HEK293 (cell line): ENCODE measurements at regions of chr17 and their contacts with region 1.

Region 1: DNA sequence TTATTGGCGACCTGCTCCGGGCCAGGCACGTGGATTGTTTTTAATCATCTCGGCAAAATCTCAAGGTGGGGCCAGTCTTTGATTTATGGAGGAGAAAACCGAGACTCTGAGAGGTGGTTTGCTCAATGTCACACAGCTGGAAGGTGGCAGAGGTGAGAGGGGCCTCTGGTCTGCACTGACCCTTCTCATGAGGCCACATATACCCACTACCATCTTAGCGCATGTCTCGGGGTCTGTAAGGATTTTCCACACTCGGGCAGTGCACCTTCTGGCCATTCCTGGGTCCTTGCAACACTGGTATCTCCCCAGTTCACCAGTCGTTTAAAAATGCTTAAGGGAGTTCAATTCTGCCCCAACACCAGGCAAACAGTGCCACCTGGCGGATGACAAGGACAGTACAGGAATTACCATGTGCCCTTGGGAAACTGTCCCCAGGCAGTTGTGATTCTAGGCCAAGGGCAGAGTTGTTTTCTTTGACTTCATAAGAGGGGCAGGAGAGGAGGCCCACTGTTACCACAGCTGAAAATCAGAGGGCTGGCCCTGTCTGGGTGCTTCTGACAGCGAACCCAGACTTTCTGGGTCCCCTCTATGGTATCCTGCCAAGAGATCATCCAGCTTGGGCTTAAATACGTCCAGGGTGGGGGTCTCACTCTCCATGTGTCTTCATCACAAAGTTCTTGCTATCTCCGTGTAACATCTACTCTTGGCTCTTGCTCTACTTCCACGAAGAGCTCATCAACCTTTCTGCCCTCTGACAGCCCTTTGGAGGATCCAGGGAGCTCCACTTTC is 39.4 kb upstream of the RAI1 start:
- H3K4me3 ChIP-seq: no peak overlapping the region
- H3K27ac ChIP-seq: no peak overlapping the region
- H3K4me1 ChIP-seq: no peaks in the 10 kb centered on the region
- CTCF ChIP-seq: peak; percentile 88

Region 2: GRCh38 chr17:17366941-17367875 is 274.6 kb before region 1 on chr17:
- CTCF ChIA-PET with region 1: interaction called, 10 read pairs
- POLR2A ChIA-PET with region 1: no interaction called
- H3K4me3 ChIP-seq: no peak overlapping the region
- H3K27ac ChIP-seq: no peak overlapping the region
- H3K4me1 ChIP-seq: no peaks in the 10 kb centered on the region
- CTCF ChIP-seq: no peak

Region 3: DNA sequence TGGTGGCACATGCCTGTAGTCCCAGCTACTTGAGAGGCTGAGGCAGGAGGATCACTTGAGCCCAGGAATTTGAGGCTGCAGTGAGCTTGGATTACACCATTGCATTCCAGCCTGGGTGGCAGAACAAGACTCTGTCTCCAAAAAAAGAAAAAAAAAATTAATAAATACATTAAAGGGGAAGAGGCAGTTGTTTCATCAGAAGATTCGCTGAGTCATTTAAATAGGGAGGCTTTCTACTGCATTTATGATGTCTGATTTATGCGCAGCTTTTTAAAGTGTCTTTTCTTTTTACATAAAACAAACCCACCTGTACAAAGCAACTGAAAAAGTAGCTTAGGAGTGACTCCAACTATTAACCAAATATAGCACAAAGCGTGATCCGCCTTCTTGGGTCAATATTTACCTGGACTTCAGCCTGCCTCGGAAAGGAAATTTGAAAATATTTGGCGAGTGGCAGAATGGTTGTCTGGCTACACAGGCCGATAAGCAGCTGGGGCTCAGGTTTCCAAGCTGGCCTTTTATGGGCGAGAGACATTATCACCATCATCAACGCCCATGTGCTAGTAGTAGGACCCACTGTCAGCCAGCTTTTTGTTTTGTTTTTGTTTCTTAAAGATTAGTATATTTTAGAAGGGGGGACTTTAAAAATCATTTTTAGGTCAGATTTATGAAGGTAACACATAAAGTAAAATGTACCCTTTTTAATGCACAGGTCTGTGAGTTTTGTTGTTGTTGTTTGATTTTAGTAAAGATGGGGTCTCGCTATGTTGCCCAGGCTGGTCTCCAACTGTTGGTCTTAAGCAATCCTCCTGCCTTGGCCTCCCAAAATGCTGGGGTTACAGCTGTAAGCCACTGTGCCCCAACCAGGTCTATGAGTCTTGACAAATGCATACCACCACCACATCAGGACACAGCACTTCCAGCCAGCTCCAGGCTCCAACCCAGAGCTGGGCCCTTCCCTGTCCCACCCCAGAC is 103.1 kb before region 1 on chr17:
- CTCF ChIA-PET with region 1: interaction called, 11 read pairs
- POLR2A ChIA-PET with region 1: no interaction called
- H3K4me3 ChIP-seq: no peak overlapping the region
- H3K27ac ChIP-seq: no peak overlapping the region
- H3K4me1 ChIP-seq: peaks cover 7% of the 10 kb centered on the region
- CTCF ChIP-seq: no peak

Region 4: GRCh38 chr17:17613708-17614114 is 28.1 kb before region 1 on chr17:
- CTCF ChIA-PET with region 1: interaction called, 16 read pairs
- POLR2A ChIA-PET with region 1: no interaction called
- H3K4me3 ChIP-seq: no peak overlapping the region
- H3K27ac ChIP-seq: no peak overlapping the region
- H3K4me1 ChIP-seq: no peaks in the 10 kb centered on the region
- CTCF ChIP-seq: peak; percentile 57

Region 5: GRCh38 chr17:17624741-17625140 is 17.1 kb before region 1 on chr17:
- CTCF ChIA-PET with region 1: interaction called, 10 read pairs
- POLR2A ChIA-PET with region 1: interaction called, 4 read pairs
- H3K4me3 ChIP-seq: no peak overlapping the region
- H3K27ac ChIP-seq: no peak overlapping the region
- H3K4me1 ChIP-seq: no peaks in the 10 kb centered on the region
- CTCF ChIP-seq: no peak

Region 6: GRCh38 chr17:17792551-17793377 is 150.9 kb after region 1 on chr17:
- CTCF ChIA-PET with region 1: no interaction called
- POLR2A ChIA-PET with region 1: no interaction called
- H3K4me3 ChIP-seq: no peak overlapping the region
- H3K27ac ChIP-seq: no peak overlapping the region
- H3K4me1 ChIP-seq: no peaks in the 10 kb centered on the region
- CTCF ChIP-seq: no peak